ENCODE measurements at regions of chr5 and their contacts with region 1.

Region 1: GRCh38 chr5:141564216-141564692 is 54.5 kb downstream of the DIAPH1 start:
- DNase-seq: peak; percentile 85
- H3K4me3 Mint-ChIP-seq: no peak overlapping the region
- H3K27ac Mint-ChIP-seq: peak overlapping the region; percentile 77
- H3K4me1 Mint-ChIP-seq: peaks cover 32% of the 10 kb centered on the region
- H3K27me3 Mint-ChIP-seq: no peaks in the 10 kb centered on the region

Region 2: GRCh38 chr5:141402553-141403260 is 161.5 kb before region 1 on chr5 and contains the start of gene PCDHGA9:
- CTCF ChIA-PET with region 1: interaction called, 11 read pairs
- POLR2A ChIA-PET with region 1: no interaction called
- DNase-seq: no peak
- H3K4me3 Mint-ChIP-seq: no peak within 1 kb of the TSS
- H3K27ac Mint-ChIP-seq: no peak within 1 kb of the TSS
- H3K4me1 Mint-ChIP-seq: no peaks in the 10 kb centered on the region
- H3K27me3 Mint-ChIP-seq: peaks cover 48% of the 10 kb centered on the region
- total RNA-seq, gene PCDHGA9: not detected

Region 3: DNA sequence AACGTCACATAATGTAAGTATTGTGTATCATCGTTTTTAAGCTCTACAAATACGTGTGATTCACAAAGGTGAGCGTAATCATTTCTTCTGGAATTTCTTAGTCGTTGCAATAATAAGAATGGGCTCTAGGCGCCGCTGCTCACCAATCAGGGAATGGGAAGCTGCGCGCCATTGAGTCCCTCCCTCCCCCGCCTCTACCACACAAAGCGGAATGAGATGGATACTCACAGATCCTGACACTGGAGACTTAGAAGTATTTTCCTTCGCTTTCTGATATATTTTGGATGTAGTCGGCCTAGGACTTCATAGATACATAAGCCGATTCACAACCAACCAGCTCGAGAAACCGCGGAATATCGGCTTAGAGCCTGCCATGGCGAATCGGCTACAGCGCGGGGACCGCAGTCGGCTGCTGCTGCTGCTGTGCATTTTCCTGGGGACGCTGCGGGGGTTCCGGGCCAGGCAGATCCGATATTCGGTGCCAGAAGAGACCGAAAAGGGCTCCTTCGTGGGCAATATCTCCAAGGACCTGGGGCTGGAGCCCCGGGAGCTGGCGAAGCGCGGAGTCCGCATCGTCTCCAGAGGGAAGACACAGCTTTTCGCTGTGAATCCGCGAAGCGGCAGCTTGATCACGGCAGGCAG is 143.3 kb before region 1 on chr5 and contains the start of gene PCDHGA11:
- CTCF ChIA-PET with region 1: interaction called, 18 read pairs
- POLR2A ChIA-PET with region 1: no interaction called
- DNase-seq: peak; percentile 38
- H3K4me3 Mint-ChIP-seq: peak within 1 kb of the TSS; percentile 66
- H3K27ac Mint-ChIP-seq: peak within 1 kb of the TSS; percentile 73
- H3K4me1 Mint-ChIP-seq: peaks cover 8% of the 10 kb centered on the region
- H3K27me3 Mint-ChIP-seq: peaks cover 67% of the 10 kb centered on the region
- total RNA-seq, gene PCDHGA11: not detected

Region 4: GRCh38 chr5:141501761-141502160 is 62.5 kb before region 1 on chr5:
- CTCF ChIA-PET with region 1: no interaction called
- POLR2A ChIA-PET with region 1: no interaction called
- DNase-seq: no peak
- H3K4me3 Mint-ChIP-seq: no peak overlapping the region
- H3K27ac Mint-ChIP-seq: no peak overlapping the region
- H3K4me1 Mint-ChIP-seq: no peaks in the 10 kb centered on the region
- H3K27me3 Mint-ChIP-seq: peaks cover 3% of the 10 kb centered on the region

Region 5: GRCh38 chr5:141512390-141512910 is 51.8 kb before region 1 on chr5:
- CTCF ChIA-PET with region 1: interaction called, 13 read pairs
- POLR2A ChIA-PET with region 1: no interaction called
- DNase-seq: peak; percentile 83
- H3K4me3 Mint-ChIP-seq: peak overlapping the region; percentile 61
- H3K27ac Mint-ChIP-seq: peak overlapping the region; percentile 61
- H3K4me1 Mint-ChIP-seq: peaks cover 27% of the 10 kb centered on the region
- H3K27me3 Mint-ChIP-seq: no peaks in the 10 kb centered on the region

Region 6: GRCh38 chr5:141618804-141619554 is 54.7 kb after region 1 on chr5 and contains the start of gene DIAPH1:
- CTCF ChIA-PET with region 1: interaction called, 18 read pairs
- POLR2A ChIA-PET with region 1: interaction called, 3 read pairs
- DNase-seq: peak; percentile 97
- H3K4me3 Mint-ChIP-seq: peak within 1 kb of the TSS; percentile 99
- H3K27ac Mint-ChIP-seq: peak within 1 kb of the TSS; percentile 97
- H3K4me1 Mint-ChIP-seq: peaks cover 59% of the 10 kb centered on the region
- H3K27me3 Mint-ChIP-seq: no peaks in the 10 kb centered on the region
- total RNA-seq, gene DIAPH1: 297 to 302 TPM